Gastrocnemius medialis (tissue), 4 donors: ENCODE measurements at regions of chr3 and their contacts with region 1.

Region 1: GRCh38 chr3:156181323-156181908 is 61.0 kb downstream of the KCNAB1 start:
- DNase-seq: no peak
- ATAC-seq: no peak
- H3K4me3 ChIP-seq: no peak overlapping the region
- H3K27ac ChIP-seq: no peak overlapping the region
- H3K4me1 ChIP-seq: no peaks in the 10 kb centered on the region
- H3K27me3 ChIP-seq: no peaks in the 10 kb centered on the region
- CTCF ChIP-seq: no peak
- POLR2A ChIP-seq: no peak

Region 2: DNA sequence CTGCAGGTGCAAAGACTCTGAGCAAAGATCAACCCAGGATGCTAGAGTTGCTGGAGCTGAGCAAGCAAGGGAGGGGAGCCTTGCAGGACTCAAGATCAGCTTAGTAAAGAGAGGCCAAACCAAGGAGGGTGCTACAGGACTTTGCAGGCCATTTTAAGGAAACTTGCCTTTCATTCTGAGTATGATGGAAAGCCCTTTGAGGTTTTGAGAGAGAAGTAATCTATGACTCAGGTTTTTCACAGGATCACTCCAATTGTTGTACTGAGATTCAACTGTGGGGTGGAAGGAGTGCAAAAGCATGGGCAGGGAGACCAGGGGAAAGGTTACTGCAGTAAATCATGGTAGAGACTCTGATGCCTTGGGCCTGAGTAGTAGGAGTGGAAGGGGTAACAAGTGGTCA is 1491.0 kb before region 1 on chr3:
- in situ Hi-C with region 1: no loop called
- intact Hi-C with region 1: no loop called
- DNase-seq: no peak
- ATAC-seq: no peak
- H3K4me3 ChIP-seq: no peak overlapping the region
- H3K27ac ChIP-seq: no peak overlapping the region
- H3K4me1 ChIP-seq: no peaks in the 10 kb centered on the region
- H3K27me3 ChIP-seq: no peaks in the 10 kb centered on the region
- CTCF ChIP-seq: no peak
- POLR2A ChIP-seq: no peak

Region 3: DNA sequence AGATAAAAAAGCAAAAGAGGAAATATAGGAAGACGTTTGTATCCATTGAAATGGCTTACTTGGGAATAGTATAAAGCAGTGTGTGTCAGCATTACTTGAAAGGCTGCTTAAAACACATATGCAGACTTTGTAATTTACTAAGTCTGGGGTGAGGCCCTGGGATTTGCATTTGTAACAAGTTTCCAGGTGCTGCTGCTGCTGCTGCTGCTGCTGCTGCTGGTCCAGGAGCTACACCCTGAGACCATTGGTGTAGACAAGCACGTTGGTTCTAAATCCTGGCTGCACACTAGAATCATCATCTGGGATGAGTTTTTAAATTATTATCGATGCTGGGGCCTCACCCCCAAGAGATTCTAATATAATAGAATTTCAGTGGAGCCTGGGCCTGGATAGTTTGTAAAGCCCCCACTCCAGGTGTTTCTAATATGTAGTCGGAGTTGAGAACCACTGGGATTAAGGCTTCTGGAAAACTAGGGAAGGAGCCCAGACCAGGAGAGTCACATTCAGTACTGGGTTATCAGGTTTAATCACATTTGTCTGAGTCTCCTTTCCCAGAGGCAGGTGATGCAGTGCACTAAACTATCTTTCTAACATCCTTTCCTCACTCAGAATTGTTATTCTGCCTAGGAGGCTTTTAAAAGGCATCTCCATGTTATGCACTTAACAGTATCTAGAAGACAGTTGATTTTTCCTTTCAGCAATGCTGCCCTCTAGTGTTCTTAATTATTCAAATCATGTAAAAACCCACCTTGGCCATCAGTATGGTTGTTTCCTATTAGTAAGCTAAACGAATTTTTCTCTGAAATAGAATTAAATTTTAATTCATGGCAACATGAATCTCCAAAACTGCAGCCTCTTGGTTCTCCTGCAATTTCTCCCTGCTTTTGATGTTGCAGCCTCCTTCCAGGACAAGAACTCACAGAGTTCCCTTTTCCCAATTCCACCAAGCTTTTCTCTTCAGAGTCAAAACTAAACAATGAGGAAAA is 328.1 kb after region 1 on chr3:
- in situ Hi-C with region 1: loop called in 1 of 4 experiments (anchors 10 kb)
- intact Hi-C with region 1: no loop called
- DNase-seq: no peak
- ATAC-seq: peak; percentile 74 to 76
- H3K4me3 ChIP-seq: no peak overlapping the region
- H3K27ac ChIP-seq: no peak overlapping the region
- H3K4me1 ChIP-seq: no peaks in the 10 kb centered on the region
- H3K27me3 ChIP-seq: no peaks in the 10 kb centered on the region
- CTCF ChIP-seq: peak; percentile 29 to 63 (median 45)
- POLR2A ChIP-seq: no peak